GM13976 (cell line): ENCODE measurements at regions of chr5 and their contacts with region 1.

Region 1: GRCh38 chr5:147822686-147823491 is 8.6 kb downstream of the SPINK1 start:
- DNase-seq: peak; percentile 29
- CTCF ChIP-seq: peak; percentile 67

Region 2: GRCh38 chr5:147628058-147628895 is 194.6 kb before region 1 on chr5:
- in situ Hi-C with region 1: loop called (anchors 10 kb)
- DNase-seq: peak; percentile 44
- CTCF ChIP-seq: peak; percentile 80